CD4-positive, alpha-beta T cell (primary cell): ENCODE measurements at regions of chr18 and their contacts with region 1.

Region 1: DNA sequence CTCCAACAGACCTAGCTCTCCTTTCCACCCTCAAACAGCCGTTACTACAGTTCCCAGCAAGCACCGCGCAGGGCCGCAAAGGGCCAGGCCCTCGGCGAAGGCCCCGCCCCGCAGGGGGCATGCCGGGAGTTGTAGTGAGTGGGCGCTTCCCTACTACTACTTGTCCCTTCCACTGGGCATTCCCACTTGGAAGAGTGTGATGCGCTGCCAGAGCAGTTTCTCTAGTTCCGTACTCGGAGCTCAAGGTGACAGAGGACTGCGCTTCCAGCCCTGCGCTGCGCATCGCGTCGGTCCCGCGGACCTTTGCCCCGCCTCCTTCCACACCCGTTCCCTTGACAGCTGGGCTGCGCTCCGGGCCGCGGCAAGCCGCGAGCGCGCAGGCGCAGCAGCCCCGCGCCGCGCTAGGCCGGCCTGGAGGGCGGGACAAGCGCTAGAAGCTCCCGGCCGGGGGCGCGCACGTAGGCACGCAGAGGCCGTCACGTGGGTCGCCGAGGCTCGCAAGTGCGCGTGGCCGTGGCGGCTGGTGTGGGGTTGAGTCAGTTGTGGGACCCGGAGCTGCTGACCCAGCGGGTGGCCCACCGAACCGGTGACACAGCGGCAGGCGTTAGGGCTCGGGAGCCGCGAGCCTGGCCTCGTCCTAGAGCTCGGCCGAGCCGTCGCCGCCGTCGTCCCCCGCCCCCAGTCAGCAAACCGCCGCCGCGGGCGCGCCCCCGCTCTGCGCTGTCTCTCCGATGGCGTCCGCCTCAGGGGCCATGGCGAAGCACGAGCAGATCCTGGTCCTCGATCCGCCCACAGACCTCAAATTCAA is at the start of gene VAPA:
- DNase-seq: peak; percentile 85 to 99 (median 91)
- ATAC-seq: peak; percentile 81
- H3K4me3 ChIP-seq: peak within 1 kb of the TSS; percentile 68
- H3K4me3 Mint-ChIP-seq: peak within 1 kb of the TSS; percentile 95
- H3K27ac ChIP-seq: peak within 1 kb of the TSS; percentile 93 to 94
- H3K27ac Mint-ChIP-seq: peak within 1 kb of the TSS; percentile 98
- H3K4me1 ChIP-seq: peaks cover 21% of the 10 kb centered on the region
- H3K4me1 Mint-ChIP-seq: peaks cover 31% of the 10 kb centered on the region
- H3K27me3 ChIP-seq: no peaks in the 10 kb centered on the region
- H3K27me3 Mint-ChIP-seq: peaks cover 8% of the 10 kb centered on the region
- CTCF ChIP-seq: no peak
- total RNA-seq, gene VAPA: 162 to 177 TPM

Region 2: GRCh38 chr18:8608795-8609658 is 1304.7 kb before region 1 on chr18 and contains the start of gene RAB12:
- CTCF ChIA-PET with region 1: interaction called, 8 read pairs
- POLR2A ChIA-PET with region 1: interaction called, 9 read pairs
- intact Hi-C with region 1: loop called in 1 of 2 experiments (anchors 10 kb)
- DNase-seq: peak; percentile 74 to 95 (median 86)
- ATAC-seq: peak; percentile 84
- H3K4me3 ChIP-seq: peak within 1 kb of the TSS; percentile 92
- H3K4me3 Mint-ChIP-seq: peak within 1 kb of the TSS; percentile 92
- H3K27ac ChIP-seq: peak within 1 kb of the TSS in 1 of 2 donors; percentile 71
- H3K27ac Mint-ChIP-seq: peak within 1 kb of the TSS; percentile 87
- H3K4me1 ChIP-seq: peaks cover 40% of the 10 kb centered on the region
- H3K4me1 Mint-ChIP-seq: peaks cover 58% of the 10 kb centered on the region
- H3K27me3 ChIP-seq: no peaks in the 10 kb centered on the region
- H3K27me3 Mint-ChIP-seq: peaks cover 8% of the 10 kb centered on the region
- CTCF ChIP-seq: peak; percentile 61
- total RNA-seq, gene RAB12: 20.1 to 20.3 TPM

Region 3: DNA sequence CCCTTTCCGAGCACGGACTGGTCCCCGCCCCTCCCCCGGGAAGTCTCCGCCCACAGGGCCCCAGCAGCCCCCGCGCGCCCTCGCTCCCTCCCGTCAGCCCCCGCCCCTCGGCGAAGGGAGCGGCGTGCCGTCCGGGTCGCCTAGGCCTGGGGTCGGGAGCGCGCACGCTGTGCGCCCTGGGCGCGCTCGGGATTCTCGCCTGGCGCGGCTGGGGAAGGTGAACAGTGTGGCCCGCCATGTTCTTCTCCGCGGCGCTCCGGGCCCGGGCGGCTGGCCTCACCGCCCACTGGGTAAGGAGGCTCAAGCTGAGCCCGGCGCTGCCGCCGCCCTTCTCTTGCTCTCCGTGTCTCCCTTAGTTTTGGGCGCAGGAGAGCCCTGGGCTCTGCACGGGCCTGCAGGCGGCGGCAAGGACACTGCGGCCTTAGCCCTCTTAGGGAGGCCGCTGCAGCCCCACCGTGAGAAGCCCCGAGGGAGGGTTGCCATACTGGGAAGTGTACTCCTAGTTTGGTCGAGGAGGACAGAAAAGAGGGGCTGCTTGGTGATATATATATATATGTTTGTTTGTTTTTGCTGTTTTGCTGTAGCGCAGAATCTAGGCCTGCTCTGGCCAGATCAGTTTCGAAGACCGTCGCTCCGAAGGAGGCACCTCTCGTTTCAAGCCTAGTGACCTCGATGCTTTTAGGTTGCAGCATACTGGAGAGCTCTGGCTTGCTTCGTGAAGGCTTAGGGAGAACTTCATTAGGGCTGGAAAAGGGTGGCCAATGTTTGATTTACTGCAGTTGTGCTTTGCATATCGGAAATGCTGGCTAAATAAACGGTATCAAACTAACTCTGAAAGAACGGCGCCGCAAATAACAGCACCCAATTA is 811.0 kb before region 1 on chr18 and contains the start of gene NDUFV2:
- CTCF ChIA-PET with region 1: no interaction called
- POLR2A ChIA-PET with region 1: interaction called, 6 read pairs
- intact Hi-C with region 1: loop called (anchors 10 kb)
- DNase-seq: peak; percentile 93 to 99 (median 98)
- ATAC-seq: peak; percentile 87
- H3K4me3 ChIP-seq: peak within 1 kb of the TSS; percentile 74
- H3K4me3 Mint-ChIP-seq: peak within 1 kb of the TSS; percentile 95
- H3K27ac ChIP-seq: peak within 1 kb of the TSS; percentile 82 to 91
- H3K27ac Mint-ChIP-seq: peak within 1 kb of the TSS; percentile 90
- H3K4me1 ChIP-seq: peaks cover 22% of the 10 kb centered on the region
- H3K4me1 Mint-ChIP-seq: peaks cover 65% of the 10 kb centered on the region
- H3K27me3 ChIP-seq: no peaks in the 10 kb centered on the region
- H3K27me3 Mint-ChIP-seq: no peaks in the 10 kb centered on the region
- CTCF ChIP-seq: no peak
- total RNA-seq, gene NDUFV2: 230 to 231 TPM

Region 4: DNA sequence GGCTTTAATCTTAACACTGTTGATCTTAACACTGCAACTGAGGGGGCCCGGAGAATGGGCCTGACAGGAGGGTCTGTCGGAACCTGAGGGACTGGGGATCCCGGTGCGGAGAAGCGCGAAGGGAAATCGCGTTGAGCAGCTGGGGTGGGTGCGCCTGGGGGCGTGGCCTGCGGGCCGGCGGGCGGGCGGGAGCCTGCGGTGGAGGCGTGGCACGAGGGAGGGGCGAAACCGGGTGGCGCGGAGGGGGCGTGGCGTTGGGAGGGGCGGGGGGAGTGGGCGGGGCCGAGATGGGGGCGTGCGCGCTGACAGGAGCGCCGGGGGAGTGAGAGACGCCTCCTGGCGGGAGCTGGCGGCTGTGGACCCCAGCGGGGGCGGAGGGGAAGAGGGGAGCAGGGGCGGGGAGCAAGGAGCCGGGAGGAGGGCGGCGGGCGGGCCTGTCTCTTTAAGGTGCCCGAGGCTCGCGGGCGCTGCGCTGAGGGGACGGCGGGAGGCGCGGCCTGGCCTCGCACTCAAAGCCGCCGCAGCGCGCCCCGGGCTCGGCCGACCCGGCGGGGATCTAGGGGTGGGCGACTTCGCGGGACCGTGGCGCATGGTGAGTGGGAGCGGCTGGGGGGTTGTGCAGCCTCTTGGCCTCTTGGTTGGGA is 579.3 kb before region 1 on chr18 and contains the start of gene TWSG1:
- CTCF ChIA-PET with region 1: no interaction called
- POLR2A ChIA-PET with region 1: interaction called, 8 read pairs
- intact Hi-C with region 1: loop called in 1 of 2 experiments (anchors 5 kb)
- DNase-seq: peak; percentile 89 to 96 (median 93)
- ATAC-seq: peak; percentile 88
- H3K4me3 ChIP-seq: peak within 1 kb of the TSS; percentile 80
- H3K4me3 Mint-ChIP-seq: peak within 1 kb of the TSS; percentile 95
- H3K27ac ChIP-seq: peak within 1 kb of the TSS; percentile 36 to 40
- H3K27ac Mint-ChIP-seq: peak within 1 kb of the TSS; percentile 88
- H3K4me1 ChIP-seq: peaks cover 13% of the 10 kb centered on the region
- H3K4me1 Mint-ChIP-seq: peaks cover 25% of the 10 kb centered on the region
- H3K27me3 ChIP-seq: no peaks in the 10 kb centered on the region
- H3K27me3 Mint-ChIP-seq: no peaks in the 10 kb centered on the region
- CTCF ChIP-seq: peak; percentile 35
- total RNA-seq, gene TWSG1: 2.8 TPM

Region 5: GRCh38 chr18:9614401-9615279 is 299.1 kb before region 1 on chr18 and contains the start of gene PPP4R1:
- CTCF ChIA-PET with region 1: no interaction called
- POLR2A ChIA-PET with region 1: interaction called, 6 read pairs
- intact Hi-C with region 1: loop called (anchors 5 to 10 kb)
- DNase-seq: peak; percentile 40 to 86 (median 66)
- ATAC-seq: peak; percentile 53
- H3K4me3 ChIP-seq: peak within 1 kb of the TSS; percentile 79
- H3K4me3 Mint-ChIP-seq: peak within 1 kb of the TSS; percentile 97
- H3K27ac ChIP-seq: peak within 1 kb of the TSS; percentile 33 to 53
- H3K27ac Mint-ChIP-seq: peak within 1 kb of the TSS; percentile 88
- H3K4me1 ChIP-seq: peaks cover 21% of the 10 kb centered on the region
- H3K4me1 Mint-ChIP-seq: peaks cover 37% of the 10 kb centered on the region
- H3K27me3 ChIP-seq: no peaks in the 10 kb centered on the region
- H3K27me3 Mint-ChIP-seq: no peaks in the 10 kb centered on the region
- CTCF ChIP-seq: no peak
- total RNA-seq, gene PPP4R1: 35.7 to 40.2 TPM

Region 6: GRCh38 chr18:9933865-9934264 is 20.1 kb after region 1 on chr18:
- CTCF ChIA-PET with region 1: no interaction called
- POLR2A ChIA-PET with region 1: interaction called, 8 read pairs
- intact Hi-C with region 1: loop called in 1 of 2 experiments (anchors 2 kb)
- DNase-seq: no peak
- ATAC-seq: no peak
- H3K4me3 ChIP-seq: no peak overlapping the region
- H3K4me3 Mint-ChIP-seq: no peak overlapping the region
- H3K27ac ChIP-seq: no peak overlapping the region
- H3K27ac Mint-ChIP-seq: no peak overlapping the region
- H3K4me1 ChIP-seq: no peaks in the 10 kb centered on the region
- H3K4me1 Mint-ChIP-seq: peaks cover 38% of the 10 kb centered on the region
- H3K27me3 ChIP-seq: no peaks in the 10 kb centered on the region
- H3K27me3 Mint-ChIP-seq: no peaks in the 10 kb centered on the region
- CTCF ChIP-seq: no peak

Region 7: GRCh38 chr18:10525371-10526210 is 611.9 kb after region 1 on chr18 and contains the start of gene NAPG:
- CTCF ChIA-PET with region 1: no interaction called
- POLR2A ChIA-PET with region 1: interaction called, 6 read pairs
- intact Hi-C with region 1: loop called in 1 of 2 experiments (anchors 2 kb)
- DNase-seq: peak; percentile 75 to 98 (median 86)
- ATAC-seq: peak; percentile 85
- H3K4me3 ChIP-seq: peak within 1 kb of the TSS; percentile 87
- H3K4me3 Mint-ChIP-seq: peak within 1 kb of the TSS; percentile 99
- H3K27ac ChIP-seq: peak within 1 kb of the TSS; percentile 55 to 86
- H3K27ac Mint-ChIP-seq: peak within 1 kb of the TSS; percentile 96
- H3K4me1 ChIP-seq: peaks cover 42% of the 10 kb centered on the region
- H3K4me1 Mint-ChIP-seq: peaks cover 56% of the 10 kb centered on the region
- H3K27me3 ChIP-seq: peaks cover 0 to 5% of the 10 kb centered on the region in 2 experiments
- H3K27me3 Mint-ChIP-seq: no peaks in the 10 kb centered on the region
- CTCF ChIP-seq: no peak
- total RNA-seq, gene NAPG: 25.9 to 27.3 TPM